Endothelial cell of umbilical vein (primary cell): ENCODE measurements at regions of chr16 and their contacts with region 1.

Region 1: GRCh38 chr16:84738255-84739038 is 38.6 kb downstream of the USP10 start:
- DNase-seq: peak; percentile 92
- H3K4me3 ChIP-seq: no peak overlapping the region
- H3K27ac ChIP-seq: no peak overlapping the region
- H3K4me1 ChIP-seq: peaks cover 28% of the 10 kb centered on the region
- H3K27me3 ChIP-seq: no peaks in the 10 kb centered on the region
- CTCF ChIP-seq: peak; percentile 88 to 92
- POLR2A ChIP-seq: no peak

Region 2: DNA sequence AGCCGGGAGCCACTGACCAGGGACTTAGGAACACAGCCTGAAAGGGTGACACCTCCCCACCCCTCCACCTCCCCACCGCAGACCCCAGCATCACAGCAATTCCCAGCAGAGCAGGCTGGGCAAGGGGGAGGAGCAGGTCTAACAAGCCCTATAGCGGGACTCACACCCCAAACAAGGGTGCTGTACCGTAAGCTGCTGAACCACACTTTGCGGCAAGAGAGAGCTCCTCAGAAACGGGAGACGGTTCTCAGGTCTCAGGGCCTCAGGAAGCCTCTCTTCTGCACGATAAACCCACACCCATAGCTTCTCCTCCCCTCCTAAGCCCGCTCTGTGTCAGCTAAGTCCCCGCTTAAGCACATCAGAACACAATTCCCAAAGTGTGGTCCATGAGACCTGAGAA is 108.9 kb before region 1 on chr16:
- CTCF ChIA-PET with region 1: interaction called, 81 read pairs
- POLR2A ChIA-PET with region 1: no interaction called
- dilution Hi-C with region 1: no loop called
- intact Hi-C with region 1: no loop called
- DNase-seq: no peak
- H3K4me3 ChIP-seq: no peak overlapping the region
- H3K27ac ChIP-seq: no peak overlapping the region
- H3K4me1 ChIP-seq: no peaks in the 10 kb centered on the region
- H3K27me3 ChIP-seq: peaks cover 0 to 4% of the 10 kb centered on the region in 2 experiments
- CTCF ChIP-seq: no peak
- POLR2A ChIP-seq: no peak

Region 3: DNA sequence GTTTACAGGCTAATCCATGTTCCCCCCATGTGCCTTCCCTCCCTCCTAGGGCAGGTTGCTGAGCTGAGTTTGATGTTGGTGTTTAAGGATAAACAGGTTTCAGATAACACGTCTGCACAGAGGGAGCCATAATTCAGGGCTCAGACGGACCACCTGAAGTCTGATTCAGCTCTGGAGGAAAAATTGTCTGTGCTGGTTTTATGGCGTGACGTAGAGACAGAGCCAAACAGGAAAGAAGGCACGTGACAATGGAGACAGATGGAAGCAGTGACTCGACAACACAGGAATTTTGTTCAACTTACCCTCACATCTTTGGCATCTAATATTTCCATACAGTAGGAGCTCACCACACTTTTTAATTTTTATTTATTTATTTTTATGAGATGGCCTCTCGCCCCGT is 49.3 kb before region 1 on chr16:
- CTCF ChIA-PET with region 1: interaction called, 17 read pairs
- POLR2A ChIA-PET with region 1: no interaction called
- dilution Hi-C with region 1: no loop called
- intact Hi-C with region 1: no loop called
- DNase-seq: peak; percentile 83
- H3K4me3 ChIP-seq: no peak overlapping the region
- H3K27ac ChIP-seq: peak overlapping the region; percentile 69
- H3K4me1 ChIP-seq: peaks cover 14% of the 10 kb centered on the region
- H3K27me3 ChIP-seq: no peaks in the 10 kb centered on the region
- CTCF ChIP-seq: no peak
- POLR2A ChIP-seq: no peak

Region 4: GRCh38 chr16:84720177-84720579 is 18.3 kb before region 1 on chr16:
- CTCF ChIA-PET with region 1: interaction called, 148 read pairs
- POLR2A ChIA-PET with region 1: no interaction called
- dilution Hi-C with region 1: no loop called
- intact Hi-C with region 1: no loop called
- DNase-seq: peak; percentile 52
- H3K4me3 ChIP-seq: no peak overlapping the region
- H3K27ac ChIP-seq: no peak overlapping the region
- H3K4me1 ChIP-seq: peaks cover 29% of the 10 kb centered on the region
- H3K27me3 ChIP-seq: no peaks in the 10 kb centered on the region
- CTCF ChIP-seq: no peak
- POLR2A ChIP-seq: no peak

Region 5: DNA sequence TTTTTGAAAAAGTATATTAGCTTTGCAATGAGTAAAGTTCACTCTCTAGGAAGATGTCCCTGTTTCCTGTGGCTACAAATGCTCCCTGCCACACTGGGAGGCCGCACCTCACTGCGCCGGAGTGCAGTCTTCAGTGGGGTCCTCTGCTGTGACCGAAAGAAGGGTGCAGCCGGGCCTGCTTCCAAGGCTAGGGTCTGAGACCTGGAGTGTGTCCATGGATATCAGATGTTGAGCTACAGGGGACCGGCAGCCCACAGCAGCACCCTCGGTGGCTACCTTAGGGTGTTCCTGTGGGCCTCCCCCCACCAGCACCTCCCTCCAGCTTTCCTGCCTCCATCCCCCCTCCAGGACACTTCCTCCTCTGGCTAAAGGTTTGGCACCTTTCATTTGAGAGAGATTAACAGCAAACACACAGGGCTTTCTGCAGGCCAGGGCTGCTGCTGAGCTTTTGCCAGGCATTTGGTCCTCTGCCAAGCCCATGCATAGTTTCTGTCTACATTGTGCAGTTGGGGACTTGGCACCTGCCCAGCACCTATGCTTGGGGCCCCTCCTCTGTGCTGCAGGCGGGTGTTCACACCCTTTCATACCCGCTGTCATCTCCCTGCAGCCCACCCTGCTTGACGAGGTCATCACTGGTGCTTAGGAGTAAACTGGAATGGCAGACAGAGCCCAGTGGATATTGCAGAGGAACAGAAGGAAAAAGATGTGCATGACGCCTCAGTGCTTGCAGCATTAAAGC is 47.6 kb after region 1 on chr16:
- CTCF ChIA-PET with region 1: no interaction called
- POLR2A ChIA-PET with region 1: no interaction called
- dilution Hi-C with region 1: no loop called
- intact Hi-C with region 1: no loop called
- DNase-seq: peak; percentile 6
- H3K4me3 ChIP-seq: no peak overlapping the region
- H3K27ac ChIP-seq: no peak overlapping the region
- H3K4me1 ChIP-seq: no peaks in the 10 kb centered on the region
- H3K27me3 ChIP-seq: no peaks in the 10 kb centered on the region
- CTCF ChIP-seq: no peak
- POLR2A ChIP-seq: no peak